Activated CD8-positive, alpha-beta T cell treated with anti-CD3 and anti-CD28 coated beads for 36 hours (primary cell): ENCODE measurements at regions of chr1 and their contacts with region 1.

Region 1: DNA sequence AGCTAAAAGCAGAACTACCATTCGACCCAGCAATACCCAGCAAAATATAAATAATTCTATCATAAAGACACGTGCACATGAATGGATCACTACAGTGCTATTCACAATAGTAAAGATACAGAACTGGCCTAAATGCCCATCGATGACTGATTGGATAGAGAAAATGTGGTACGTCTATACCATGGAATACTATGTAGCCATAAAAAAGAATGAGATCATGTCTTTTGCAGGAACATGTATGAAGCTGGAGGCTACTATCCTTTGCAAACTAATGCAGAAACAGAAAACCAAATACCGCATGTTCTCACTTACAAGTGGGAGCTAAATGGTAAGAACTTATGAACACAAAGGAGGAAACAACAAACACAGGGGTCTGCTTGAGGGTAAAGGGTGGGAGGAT is 53.4 kb downstream of the UCHL5 start:
- DNase-seq: no peak
- ATAC-seq: no peak
- H3K4me3 Mint-ChIP-seq: no peak overlapping the region
- H3K27ac Mint-ChIP-seq: no peak overlapping the region
- H3K4me1 Mint-ChIP-seq: peaks cover 6% of the 10 kb centered on the region
- H3K27me3 Mint-ChIP-seq: no peaks in the 10 kb centered on the region
- CTCF ChIP-seq: no peak

Region 2: DNA sequence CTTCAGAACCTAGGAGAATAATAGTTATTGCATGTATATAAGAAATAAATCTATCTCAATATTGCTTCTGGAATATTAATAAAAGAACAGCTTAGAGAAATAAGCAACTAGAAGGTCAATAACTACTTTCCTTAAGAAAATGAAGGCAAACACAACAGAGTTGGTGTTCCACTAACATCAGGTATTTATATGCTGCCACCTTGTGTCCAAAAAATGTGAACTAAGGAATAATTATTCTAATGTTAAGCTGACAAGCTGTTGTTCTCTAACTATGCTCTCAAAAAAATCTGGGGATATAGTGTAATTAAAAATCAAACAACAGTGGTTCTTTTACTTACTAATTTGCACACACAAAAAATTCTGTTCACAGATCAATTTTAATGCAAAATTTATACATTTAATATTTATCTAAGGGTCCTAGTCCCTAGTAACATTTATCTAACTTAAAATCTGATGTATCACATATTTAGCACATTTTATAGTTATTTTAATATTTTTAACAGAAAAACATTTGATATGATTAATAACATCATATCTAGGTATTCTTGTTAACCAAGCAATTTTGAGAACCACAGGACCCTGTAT is 13.7 kb after region 1 on chr1:
- CTCF ChIA-PET with region 1: interaction called, 13 read pairs
- POLR2A ChIA-PET with region 1: interaction called, 3 read pairs
- intact Hi-C with region 1: no loop called
- DNase-seq: no peak
- ATAC-seq: no peak
- H3K4me3 Mint-ChIP-seq: no peak overlapping the region
- H3K27ac Mint-ChIP-seq: no peak overlapping the region
- H3K4me1 Mint-ChIP-seq: no peaks in the 10 kb centered on the region
- H3K27me3 Mint-ChIP-seq: no peaks in the 10 kb centered on the region
- CTCF ChIP-seq: peak; percentile 51

Region 3: GRCh38 chr1:193069748-193070385 is 64.1 kb after region 1 on chr1:
- CTCF ChIA-PET with region 1: no interaction called
- POLR2A ChIA-PET with region 1: no interaction called
- intact Hi-C with region 1: no loop called
- DNase-seq: no peak
- ATAC-seq: peak; percentile 40
- H3K4me3 Mint-ChIP-seq: no peak overlapping the region
- H3K27ac Mint-ChIP-seq: peak overlapping the region; percentile 84
- H3K4me1 Mint-ChIP-seq: peaks cover 44% of the 10 kb centered on the region
- H3K27me3 Mint-ChIP-seq: no peaks in the 10 kb centered on the region
- CTCF ChIP-seq: peak; percentile 36